ENCODE measurements at regions of chr17 and their contacts with region 1.

Region 1: GRCh38 chr17:38982858-38983746 is 15.9 kb upstream of the FBXO47 start:
- DNase-seq: peak; percentile 19
- H3K4me3 Mint-ChIP-seq: no peak overlapping the region
- H3K27ac Mint-ChIP-seq: no peak overlapping the region
- H3K4me1 Mint-ChIP-seq: peaks cover 5% of the 10 kb centered on the region
- H3K27me3 Mint-ChIP-seq: peaks cover 13% of the 10 kb centered on the region

Region 2: GRCh38 chr17:38879878-38880682 is 103.0 kb before region 1 on chr17:
- intact Hi-C with region 1: no loop called
- DNase-seq: no peak
- H3K4me3 Mint-ChIP-seq: no peak overlapping the region
- H3K27ac Mint-ChIP-seq: peak overlapping the region; percentile 50
- H3K4me1 Mint-ChIP-seq: peaks cover 58% of the 10 kb centered on the region
- H3K27me3 Mint-ChIP-seq: no peaks in the 10 kb centered on the region

Region 3: DNA sequence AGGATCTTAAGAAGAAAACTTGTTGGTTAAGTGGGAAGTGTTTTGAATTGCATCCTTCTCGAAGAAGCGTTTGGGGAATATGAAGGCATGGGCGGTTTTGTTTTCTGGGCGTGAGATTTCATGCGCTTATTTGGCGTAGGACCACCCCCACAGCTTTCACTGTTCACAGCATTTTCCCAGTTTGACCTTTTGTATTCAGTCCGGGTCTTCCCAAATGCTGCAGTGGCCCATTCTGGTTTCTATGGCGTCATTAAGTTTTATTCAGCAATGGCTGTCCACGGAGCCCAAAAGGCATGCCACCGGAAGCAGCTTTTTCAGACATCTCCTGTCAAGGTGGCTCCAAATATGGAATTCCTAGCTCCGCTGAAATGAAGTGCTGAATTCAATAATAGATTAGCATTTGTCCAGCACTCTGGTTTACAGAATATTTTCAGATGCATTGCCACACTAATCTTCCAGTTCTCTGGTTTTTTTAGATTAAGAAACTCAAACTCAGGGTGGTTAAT is 74.7 kb after region 1 on chr17:
- intact Hi-C with region 1: loop called (anchors 1 kb)
- DNase-seq: no peak
- H3K4me3 Mint-ChIP-seq: peak overlapping the region; percentile 75
- H3K27ac Mint-ChIP-seq: no peak overlapping the region
- H3K4me1 Mint-ChIP-seq: peaks cover 12% of the 10 kb centered on the region
- H3K27me3 Mint-ChIP-seq: peaks cover 6% of the 10 kb centered on the region

Region 4: DNA sequence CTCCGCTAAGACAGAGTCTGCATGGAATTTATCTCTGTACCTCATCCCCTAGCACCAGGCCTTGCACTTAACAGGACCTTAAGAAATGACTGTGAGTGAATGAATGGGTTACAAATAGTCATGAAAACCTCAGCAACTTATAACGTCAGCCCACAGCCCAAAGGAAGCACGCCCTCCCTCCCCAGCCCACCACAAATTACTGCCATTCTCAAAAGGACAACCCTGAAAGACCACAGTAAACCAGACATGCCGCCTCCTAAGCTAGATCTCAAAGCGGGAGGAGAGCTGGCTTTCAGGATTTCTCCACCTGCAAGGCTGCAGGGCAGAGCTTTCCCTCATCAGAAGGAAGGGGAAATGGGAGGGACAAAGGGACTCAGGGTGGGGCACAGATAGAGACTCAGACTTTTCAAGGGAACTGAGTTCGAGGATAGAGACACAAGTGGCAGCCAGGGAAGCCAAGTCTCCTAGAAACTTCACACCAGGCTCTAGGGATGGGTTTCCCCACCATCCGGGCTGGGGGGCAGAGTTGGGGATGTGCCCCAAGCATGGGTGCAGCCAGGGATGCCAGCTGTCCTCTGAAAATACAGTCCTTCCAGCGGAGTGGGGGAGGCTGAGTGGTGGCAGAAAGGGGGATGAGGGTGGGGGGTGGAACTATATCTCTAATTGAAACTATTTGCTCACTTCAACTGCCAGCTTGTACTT is 111.7 kb after region 1 on chr17:
- intact Hi-C with region 1: loop called (anchors 5 kb)
- DNase-seq: no peak
- H3K4me3 Mint-ChIP-seq: peak overlapping the region; percentile 1
- H3K27ac Mint-ChIP-seq: peak overlapping the region; percentile 56
- H3K4me1 Mint-ChIP-seq: peaks cover 49% of the 10 kb centered on the region
- H3K27me3 Mint-ChIP-seq: peaks cover 9% of the 10 kb centered on the region

Region 5: GRCh38 chr17:39174907-39175694 is 192.0 kb after region 1 on chr17:
- intact Hi-C with region 1: loop called (anchors 1 kb)
- DNase-seq: peak; percentile 60
- H3K4me3 Mint-ChIP-seq: no peak overlapping the region
- H3K27ac Mint-ChIP-seq: no peak overlapping the region
- H3K4me1 Mint-ChIP-seq: peaks cover 4% of the 10 kb centered on the region
- H3K27me3 Mint-ChIP-seq: peaks cover 3% of the 10 kb centered on the region

Region 6: GRCh38 chr17:39244600-39245570 is 261.8 kb after region 1 on chr17:
- intact Hi-C with region 1: loop called (anchors 1 kb)
- DNase-seq: peak; percentile 72
- H3K4me3 Mint-ChIP-seq: no peak overlapping the region
- H3K27ac Mint-ChIP-seq: no peak overlapping the region
- H3K4me1 Mint-ChIP-seq: peaks cover 4% of the 10 kb centered on the region
- H3K27me3 Mint-ChIP-seq: no peaks in the 10 kb centered on the region

Measured in activated T-helper 2 cell treated with anti-CD3 and anti-CD28 coated beads, Interferon-gamma antibody, Interleukin-2, Interleukin-4, amounts not matched to agents 10 μg/mL and 5 μg/mL and 100 μg/mL, durations not matched to agents 14 hours and 24 hours and 36 hours (primary cell).